CD14-positive monocyte (primary cell): ENCODE measurements at regions of chr11 and their contacts with region 1.

Region 1: DNA sequence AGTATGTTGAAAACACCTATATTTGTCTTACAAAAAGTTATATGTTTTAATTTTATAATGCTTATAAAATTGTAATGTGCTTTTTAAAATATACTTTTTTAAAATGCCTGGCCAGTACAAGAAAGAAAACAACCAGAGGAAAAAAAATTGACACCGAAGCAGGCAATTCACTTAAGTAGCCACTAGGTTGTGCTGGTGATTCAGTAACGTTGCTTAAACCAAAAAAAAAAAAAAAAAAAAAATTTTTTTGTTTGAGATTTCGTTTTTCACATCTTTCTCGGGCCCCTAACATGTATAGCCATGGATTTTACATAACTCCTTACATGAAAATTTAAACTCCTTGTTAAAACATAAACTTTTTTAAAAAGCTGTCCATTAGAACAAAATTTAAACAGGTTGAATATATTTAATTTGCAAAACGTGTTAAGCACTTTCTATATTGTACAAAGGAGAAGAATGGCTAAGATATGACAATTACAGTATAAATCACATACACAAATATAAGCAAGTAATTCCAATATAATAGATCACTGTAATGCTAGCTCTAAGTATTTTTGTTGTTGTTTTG is 9.2 kb downstream of the OR8B4 start:
- DNase-seq: peak in 1 of 3 donors; percentile 10
- H3K4me3 ChIP-seq: no peak overlapping the region
- H3K4me3 Mint-ChIP-seq: no peak overlapping the region
- H3K27ac ChIP-seq: no peak overlapping the region
- H3K27ac Mint-ChIP-seq: no peak overlapping the region
- H3K4me1 ChIP-seq: no peaks in the 10 kb centered on the region
- H3K4me1 Mint-ChIP-seq: no peaks in the 10 kb centered on the region
- H3K27me3 ChIP-seq: peaks cover 0 to 2% of the 10 kb centered on the region in 2 donors
- H3K27me3 Mint-ChIP-seq: peaks cover 0 to 12% (median 6%) of the 10 kb centered on the region in 3 donors
- CTCF ChIP-seq: peak; percentile 86

Region 2: DNA sequence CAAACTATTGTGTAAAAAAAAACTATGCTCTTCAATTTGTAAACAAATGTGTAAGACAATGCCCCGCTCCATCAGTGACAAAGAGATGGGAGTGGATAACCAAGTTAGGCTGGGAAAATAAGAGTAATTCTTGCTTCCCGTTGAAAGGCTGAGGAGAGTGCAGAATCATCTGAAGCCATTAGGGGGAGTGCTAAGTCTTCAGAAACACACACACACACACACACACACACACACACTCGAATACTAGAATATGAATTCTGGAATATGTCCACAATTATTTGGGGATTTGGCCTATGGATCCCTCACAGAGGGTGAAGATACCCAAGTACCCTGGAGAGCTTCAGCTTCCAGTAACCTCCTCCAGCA is 422.0 kb after region 1 on chr11:
- intact Hi-C with region 1: loop called in 1 of 2 experiments (anchors 10 kb)
- DNase-seq: peak; percentile 10 to 21 (median 15)
- H3K4me3 ChIP-seq: no peak overlapping the region
- H3K4me3 Mint-ChIP-seq: no peak overlapping the region
- H3K27ac ChIP-seq: no peak overlapping the region
- H3K27ac Mint-ChIP-seq: no peak overlapping the region
- H3K4me1 ChIP-seq: peaks cover 10 to 20% of the 10 kb centered on the region in 2 donors
- H3K4me1 Mint-ChIP-seq: peaks cover 11% of the 10 kb centered on the region
- H3K27me3 ChIP-seq: peaks cover 68 to 70% of the 10 kb centered on the region in 2 donors
- H3K27me3 Mint-ChIP-seq: peaks cover 64 to 81% (median 65%) of the 10 kb centered on the region in 3 donors
- CTCF ChIP-seq: no peak